HEK293T (cell line): ENCODE measurements at regions of chr3 and their contacts with region 1.

Region 1: DNA sequence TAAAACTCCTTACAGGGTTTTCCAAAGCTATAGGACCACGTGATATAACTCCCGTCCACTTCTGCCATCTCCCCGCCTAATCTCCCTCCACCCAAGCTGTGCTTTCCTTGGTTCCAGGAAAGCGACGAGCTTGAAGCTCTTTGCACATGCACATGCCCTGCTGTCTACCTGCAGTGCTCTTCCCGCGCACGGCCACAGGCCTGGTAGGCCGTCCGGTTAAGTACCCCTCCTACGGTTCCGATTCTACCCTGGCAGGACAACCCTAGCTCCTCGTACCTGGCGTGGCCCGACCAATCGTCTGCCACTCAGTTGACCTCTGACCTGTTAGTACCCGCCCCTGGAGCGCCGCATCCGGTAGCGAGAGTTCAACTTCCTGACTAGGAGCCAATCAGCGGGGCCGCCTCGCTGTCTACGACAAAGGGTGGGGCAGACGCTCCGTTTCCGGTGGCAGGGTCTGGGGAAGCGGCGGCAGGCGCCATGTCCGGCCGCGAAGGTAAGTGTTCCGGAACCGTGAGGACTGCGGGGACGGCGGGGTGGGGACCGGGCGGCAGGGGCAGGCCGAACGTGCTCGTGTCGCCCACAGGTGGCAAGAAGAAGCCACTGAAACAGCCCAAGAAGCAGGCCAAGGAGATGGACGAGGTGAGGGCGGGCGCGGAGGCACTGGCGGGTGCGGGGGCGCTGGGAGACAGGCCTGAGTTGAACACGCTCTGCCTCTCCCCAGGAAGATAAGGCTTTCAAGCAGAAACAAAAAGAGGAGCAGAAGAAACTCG is at the starts of genes CCDC51 and TMA7:
- DNase-seq: peak; percentile 97

Region 2: DNA sequence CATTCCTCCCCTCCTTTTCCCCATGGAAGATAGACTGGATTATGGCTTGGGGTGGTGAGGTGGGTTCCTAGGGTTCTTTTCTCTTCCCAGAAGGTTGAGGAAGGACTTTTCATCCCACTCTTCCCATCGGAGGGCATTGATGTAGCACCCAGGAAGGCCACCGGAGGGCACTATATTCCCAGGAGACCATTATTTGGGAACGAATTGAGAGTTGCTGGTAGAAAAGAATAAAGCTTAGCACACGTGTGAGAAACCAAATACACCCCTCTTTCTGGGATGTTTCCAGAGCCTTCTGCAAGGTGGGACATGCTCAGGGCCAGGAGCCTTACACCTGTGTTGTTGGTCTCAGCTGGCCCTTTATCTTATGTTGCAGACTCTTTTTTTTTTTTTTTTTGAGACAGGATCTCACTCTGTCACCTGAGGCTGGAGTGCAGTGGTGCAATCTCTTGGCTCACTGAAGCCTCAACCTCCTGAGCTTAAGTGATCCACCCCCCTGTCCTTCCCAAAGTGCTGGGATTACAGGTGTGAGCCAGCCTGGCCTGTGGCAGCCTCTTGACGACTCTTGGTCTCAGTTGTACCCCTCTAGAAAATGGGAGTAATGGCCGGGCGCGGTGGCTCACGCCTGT is 245.4 kb before region 1 on chr3:
- CTCF ChIA-PET with region 1: interaction called, 12 read pairs
- POLR2A ChIA-PET with region 1: no interaction called
- DNase-seq: peak; percentile 81

Region 3: DNA sequence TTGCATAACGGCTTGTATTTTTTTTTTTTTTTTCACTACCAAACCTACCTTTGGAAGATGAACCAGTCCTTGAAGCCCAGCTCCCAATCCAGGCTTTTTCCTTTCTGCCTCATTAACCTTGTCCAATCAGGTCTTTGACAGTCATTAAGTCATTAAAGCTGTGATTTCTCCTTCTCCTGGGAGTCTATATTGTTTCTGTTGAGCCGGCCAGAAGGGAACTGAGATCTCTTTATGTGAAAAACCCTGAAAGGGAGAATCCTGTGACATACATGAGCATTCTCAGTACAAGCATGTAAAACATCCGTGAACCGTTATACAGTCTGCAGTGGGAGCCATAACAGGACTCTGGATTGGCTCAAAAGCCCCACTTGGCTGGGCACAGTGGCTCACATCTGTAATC is 159.1 kb before region 1 on chr3:
- CTCF ChIA-PET with region 1: interaction called, 68 read pairs
- POLR2A ChIA-PET with region 1: interaction called, 3 read pairs
- DNase-seq: no peak

Region 4: DNA sequence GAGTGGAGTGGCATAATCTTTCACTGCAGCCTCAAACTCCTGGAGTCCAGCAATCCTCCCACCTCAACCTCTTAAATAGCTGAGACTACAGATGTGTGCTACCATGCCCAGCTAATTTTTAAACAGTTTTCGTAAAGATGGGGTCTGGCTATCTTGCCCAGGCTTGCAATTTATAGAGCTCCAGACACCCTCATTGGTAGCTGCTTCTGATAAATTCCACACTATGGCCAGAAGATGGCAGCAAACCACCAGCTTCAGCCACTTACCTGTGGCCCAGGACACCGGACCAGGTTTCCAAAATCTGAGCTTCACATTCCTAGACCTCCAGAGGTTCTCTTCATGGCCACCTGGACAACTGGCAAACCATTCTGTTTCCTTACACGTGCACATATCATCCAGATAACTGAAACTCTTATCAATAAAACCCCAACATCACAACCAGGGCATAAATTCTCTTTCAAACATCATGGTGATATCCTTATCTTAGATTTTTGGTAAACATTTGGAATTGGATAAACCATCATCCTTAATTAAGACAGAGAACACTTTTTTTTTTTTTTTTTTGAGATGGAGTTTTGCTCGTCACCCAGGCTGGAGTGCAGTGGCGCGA is 39.1 kb before region 1 on chr3:
- CTCF ChIA-PET with region 1: interaction called, 213 read pairs
- POLR2A ChIA-PET with region 1: interaction called, 13 read pairs
- DNase-seq: peak; percentile 80

Region 5: DNA sequence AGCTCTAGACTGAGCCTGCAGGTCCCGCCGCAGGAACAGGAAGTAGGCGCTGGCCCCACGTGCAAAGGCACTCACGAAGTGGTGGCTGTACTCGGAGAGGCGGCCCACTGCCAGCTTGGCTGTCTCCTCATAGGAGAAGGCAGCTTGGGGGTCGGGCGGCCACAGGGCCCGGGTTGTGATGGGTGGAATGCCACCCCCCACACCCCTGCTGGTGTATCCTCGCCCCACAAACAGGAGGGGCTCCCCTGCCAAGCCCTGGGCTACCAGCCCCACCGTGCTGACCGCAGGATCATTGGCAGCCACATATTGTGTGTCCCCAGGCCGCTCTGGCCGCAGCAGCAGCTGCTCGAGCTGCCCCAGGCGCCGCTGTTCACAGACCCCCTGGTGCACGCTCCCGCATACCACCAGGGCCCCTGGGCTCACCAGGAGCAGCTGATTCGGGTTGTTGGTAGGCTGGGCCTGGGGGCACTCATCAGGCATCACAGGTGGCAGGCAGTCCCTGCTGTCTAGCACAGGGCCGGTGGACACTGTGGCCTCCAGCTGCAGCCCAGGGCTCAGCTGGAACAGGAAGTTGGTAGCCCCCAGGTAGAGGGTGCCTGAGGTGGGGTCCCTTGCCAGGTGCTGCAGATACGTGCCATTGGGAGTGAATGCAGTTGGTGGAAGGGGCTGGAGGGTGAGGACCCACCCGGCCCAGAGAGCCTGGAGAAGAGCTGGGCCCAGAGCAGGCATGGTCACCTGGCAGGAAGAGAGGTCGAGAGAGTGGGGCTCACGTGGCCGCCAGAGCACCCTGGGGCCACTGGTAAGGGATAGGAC is 15.9 kb before region 1 on chr3:
- CTCF ChIA-PET with region 1: interaction called, 20 read pairs
- POLR2A ChIA-PET with region 1: interaction called, 5 read pairs
- DNase-seq: no peak

Region 6: GRCh38 chr3:48507351-48508061 is 67.5 kb after region 1 on chr3:
- CTCF ChIA-PET with region 1: interaction called, 10 read pairs
- POLR2A ChIA-PET with region 1: interaction called, 5 read pairs
- DNase-seq: peak; percentile 80